ENCODE measurements at regions of chr7 and their contacts with region 1.

Region 1: DNA sequence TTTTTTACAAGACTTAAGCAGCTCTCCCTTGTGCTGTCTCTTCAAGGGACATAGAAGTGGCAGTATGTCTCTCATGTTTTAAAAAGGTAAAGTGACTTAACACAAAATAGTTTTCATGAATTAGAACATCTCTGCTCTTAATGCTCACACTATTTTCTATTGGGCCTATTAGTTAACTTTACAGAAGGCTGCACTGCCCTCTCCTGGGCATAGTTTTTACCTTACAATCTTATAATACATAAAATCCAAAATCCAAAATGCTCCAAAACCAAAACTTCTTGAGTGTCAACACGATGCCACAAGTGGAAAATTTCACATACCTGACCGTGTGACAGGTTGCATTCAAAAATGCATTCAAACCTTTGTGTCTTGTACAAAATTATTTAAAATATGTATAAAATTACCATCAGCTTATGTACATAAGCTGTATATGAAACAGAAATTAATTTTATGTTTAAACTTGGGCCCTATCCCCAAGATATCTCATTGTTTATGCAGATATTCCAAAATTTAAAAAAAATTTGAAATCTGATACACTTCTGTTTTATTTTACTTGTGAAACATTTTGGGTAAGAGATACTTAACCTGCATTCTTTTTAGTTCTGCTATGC is 25.8 kb downstream of the TES start:
- DNase-seq: no peak
- H3K4me3 ChIP-seq: no peak overlapping the region
- H3K27ac ChIP-seq: no peak overlapping the region
- H3K27me3 ChIP-seq: no peaks in the 10 kb centered on the region
- CTCF ChIP-seq: peak; percentile 59

Region 2: GRCh38 chr7:116165717-116166116 is 70.4 kb before region 1 on chr7:
- CTCF ChIA-PET with region 1: interaction called, 100 read pairs
- POLR2A ChIA-PET with region 1: no interaction called
- DNase-seq: no peak
- H3K4me3 ChIP-seq: no peak overlapping the region
- H3K27ac ChIP-seq: no peak overlapping the region
- H3K27me3 ChIP-seq: no peaks in the 10 kb centered on the region
- CTCF ChIP-seq: no peak

Region 3: GRCh38 chr7:116180302-116180701 is 55.8 kb before region 1 on chr7:
- CTCF ChIA-PET with region 1: interaction called, 362 read pairs
- POLR2A ChIA-PET with region 1: interaction called, 3 read pairs
- DNase-seq: no peak
- H3K4me3 ChIP-seq: no peak overlapping the region
- H3K27ac ChIP-seq: no peak overlapping the region
- H3K27me3 ChIP-seq: no peaks in the 10 kb centered on the region
- CTCF ChIP-seq: peak; percentile 83

Region 4: GRCh38 chr7:116200963-116201362 is 35.2 kb before region 1 on chr7:
- CTCF ChIA-PET with region 1: interaction called, 15 read pairs
- POLR2A ChIA-PET with region 1: no interaction called
- DNase-seq: no peak
- H3K4me3 ChIP-seq: no peak overlapping the region
- H3K27ac ChIP-seq: no peak overlapping the region
- H3K27me3 ChIP-seq: no peaks in the 10 kb centered on the region
- CTCF ChIP-seq: no peak

Region 5: GRCh38 chr7:116224492-116225098 is 11.5 kb before region 1 on chr7:
- CTCF ChIA-PET with region 1: interaction called, 29 read pairs
- POLR2A ChIA-PET with region 1: no interaction called
- DNase-seq: no peak
- H3K4me3 ChIP-seq: no peak overlapping the region
- H3K27ac ChIP-seq: no peak overlapping the region
- H3K27me3 ChIP-seq: no peaks in the 10 kb centered on the region
- CTCF ChIP-seq: no peak

Region 6: GRCh38 chr7:116305485-116306408 is 69.6 kb after region 1 on chr7:
- CTCF ChIA-PET with region 1: no interaction called
- POLR2A ChIA-PET with region 1: no interaction called
- DNase-seq: no peak
- H3K4me3 ChIP-seq: no peak overlapping the region
- H3K27ac ChIP-seq: no peak overlapping the region
- H3K27me3 ChIP-seq: no peaks in the 10 kb centered on the region
- CTCF ChIP-seq: no peak

Region 7: DNA sequence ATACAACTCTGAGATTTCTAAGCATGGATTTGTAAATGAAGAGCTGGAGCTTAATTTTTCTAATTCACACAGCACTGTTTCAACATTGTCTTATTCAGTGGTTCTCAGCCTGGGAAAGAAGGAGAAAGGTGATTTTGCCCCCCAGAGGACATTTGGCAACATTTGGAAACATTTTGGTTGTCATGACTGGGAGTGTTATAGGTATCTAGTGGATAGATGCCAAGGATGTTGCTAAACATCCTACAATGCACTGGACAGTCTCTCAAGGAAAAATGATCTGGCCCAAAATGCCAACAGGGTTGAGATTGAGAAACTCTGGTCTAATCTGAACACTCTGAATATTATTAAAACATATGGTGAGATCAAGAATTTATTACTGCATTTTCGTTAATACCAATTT is 259.6 kb after region 1 on chr7:
- CTCF ChIA-PET with region 1: no interaction called
- POLR2A ChIA-PET with region 1: no interaction called
- DNase-seq: no peak
- H3K4me3 ChIP-seq: no peak overlapping the region
- H3K27ac ChIP-seq: no peak overlapping the region
- H3K27me3 ChIP-seq: no peaks in the 10 kb centered on the region
- CTCF ChIP-seq: no peak